ENCODE measurements at regions of chr11 and their contacts with region 1.

Region 1: DNA sequence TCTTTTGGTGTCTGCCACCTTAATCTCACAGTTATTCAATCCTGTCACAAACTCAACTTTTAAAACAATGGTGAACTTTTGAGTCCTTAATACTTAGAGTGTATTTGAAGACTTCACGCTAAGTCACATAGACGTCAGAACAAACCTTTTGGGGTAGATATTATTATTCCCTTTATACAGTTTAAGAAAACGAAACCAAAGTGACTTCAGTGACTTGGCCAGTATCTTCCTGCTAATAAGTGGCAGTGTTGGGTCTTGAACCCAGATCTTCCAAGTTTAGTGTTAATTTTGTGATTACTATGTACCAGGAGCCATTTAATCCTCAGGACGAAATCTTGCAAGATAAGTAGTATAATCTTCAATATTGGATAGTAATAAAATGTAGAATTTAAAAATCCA is 694 bp downstream of the CEP295 start:
- DNase-seq: peak; percentile 34
- H3K4me3 ChIP-seq: peak overlapping the region; percentile 97
- H3K27ac ChIP-seq: peak overlapping the region; percentile 78
- H3K4me1 ChIP-seq: peaks cover 28% of the 10 kb centered on the region
- CTCF ChIP-seq: no peak

Region 2: GRCh38 chr11:93784152-93784934 is 122.2 kb after region 1 on chr11 and contains the start of gene MED17:
- CTCF ChIA-PET with region 1: no interaction called
- POLR2A ChIA-PET with region 1: interaction called, 5 read pairs
- intact Hi-C with region 1: loop called (anchors 5 kb)
- DNase-seq: peak; percentile 93
- H3K4me3 ChIP-seq: peak within 1 kb of the TSS; percentile 88
- H3K27ac ChIP-seq: peak within 1 kb of the TSS; percentile 72
- H3K4me1 ChIP-seq: peaks cover 29% of the 10 kb centered on the region
- CTCF ChIP-seq: peak; percentile 57; the same call in 1 of the 2 replicates
- total RNA-seq, gene MED17: 21.8 and 23.0 TPM in 2 replicates